ENCODE measurements at regions of chr11 and their contacts with region 1.

Region 1: DNA sequence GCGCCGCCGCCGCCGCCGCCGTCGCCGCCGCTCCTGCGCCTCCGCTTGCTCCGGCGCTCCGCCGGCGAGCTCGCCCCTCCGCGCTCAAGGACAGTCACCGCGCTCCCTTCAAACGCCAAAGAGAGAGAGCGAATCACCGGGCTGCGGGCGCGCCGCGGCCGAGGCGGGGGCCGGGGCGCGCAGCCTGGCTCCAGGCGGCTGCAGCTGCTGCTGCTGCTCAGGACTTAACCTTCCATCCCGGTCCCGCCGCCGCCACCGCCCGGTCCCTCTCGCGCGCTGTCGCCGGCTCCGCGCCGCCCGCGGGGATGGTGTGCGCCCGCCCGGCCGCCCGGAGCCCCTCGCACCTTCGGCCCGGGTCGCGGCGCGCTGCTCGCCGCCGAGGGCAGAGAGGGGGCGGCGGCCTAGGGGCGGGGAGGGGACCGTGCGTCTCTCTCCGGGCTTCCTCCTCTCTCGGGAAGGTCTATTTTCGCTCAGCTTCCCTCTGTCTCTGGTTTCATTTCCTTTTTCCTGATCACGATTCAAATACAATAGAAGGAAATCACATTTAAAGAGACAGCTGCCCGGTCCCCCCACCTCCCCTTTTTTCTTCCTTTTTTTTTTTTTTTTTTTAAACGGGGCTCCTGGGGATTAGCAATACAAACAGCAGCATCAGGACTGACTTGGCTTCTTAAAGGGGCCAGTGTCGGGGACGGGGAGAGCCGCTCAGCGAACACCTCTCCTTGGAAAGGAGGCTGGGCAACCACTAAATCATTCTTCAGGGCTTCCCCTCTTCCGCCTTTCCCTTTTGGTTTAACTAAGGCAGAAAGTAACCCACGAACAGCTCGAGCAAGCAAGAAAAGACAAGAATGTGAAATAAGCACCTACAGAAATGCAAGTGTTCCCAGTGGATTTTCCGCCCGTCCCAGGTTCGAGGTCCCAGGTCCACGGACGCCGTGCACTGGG is 22.1 kb downstream of the LMO2 start:
- DNase-seq: no peak
- H3K4me3 ChIP-seq: peak overlapping the region; percentile 30 to 60 (median 54)
- H3K27ac ChIP-seq: peak overlapping the region; percentile 55 to 79 (median 66)
- H3K4me1 ChIP-seq: peaks cover 0 to 22% (median 16%) of the 10 kb centered on the region in 4 donors
- H3K27me3 ChIP-seq: peaks cover 10 to 68% (median 41%) of the 10 kb centered on the region in 3 donors
- CTCF ChIP-seq: no peak
- EP300 ChIP-seq: no peak
- POLR2A ChIP-seq: no peak

Region 2: DNA sequence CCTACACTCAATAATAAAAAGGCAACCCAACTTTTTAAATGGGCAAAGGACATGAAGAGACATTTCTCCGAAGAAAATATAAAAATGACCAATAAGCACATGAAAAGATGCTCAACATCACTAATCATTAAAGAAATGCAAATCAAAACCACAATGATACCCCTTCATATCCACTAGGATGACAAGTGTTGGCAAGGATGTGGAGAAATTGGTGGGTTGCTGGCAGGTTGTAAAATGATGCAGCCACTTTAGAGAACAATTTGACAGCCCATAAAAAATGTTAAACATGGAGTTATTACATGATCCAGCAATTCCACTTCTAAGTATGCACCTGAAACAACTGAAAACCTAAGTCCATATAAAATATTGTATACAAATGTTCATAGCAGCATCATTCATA is 95.3 kb after region 1 on chr11:
- intact Hi-C with region 1: loop called (anchors 5 kb)
- DNase-seq: no peak
- H3K4me3 ChIP-seq: no peak overlapping the region
- H3K27ac ChIP-seq: no peak overlapping the region
- H3K4me1 ChIP-seq: no peaks in the 10 kb centered on the region
- H3K27me3 ChIP-seq: no peaks in the 10 kb centered on the region
- CTCF ChIP-seq: no peak
- EP300 ChIP-seq: no peak
- POLR2A ChIP-seq: no peak

Region 3: DNA sequence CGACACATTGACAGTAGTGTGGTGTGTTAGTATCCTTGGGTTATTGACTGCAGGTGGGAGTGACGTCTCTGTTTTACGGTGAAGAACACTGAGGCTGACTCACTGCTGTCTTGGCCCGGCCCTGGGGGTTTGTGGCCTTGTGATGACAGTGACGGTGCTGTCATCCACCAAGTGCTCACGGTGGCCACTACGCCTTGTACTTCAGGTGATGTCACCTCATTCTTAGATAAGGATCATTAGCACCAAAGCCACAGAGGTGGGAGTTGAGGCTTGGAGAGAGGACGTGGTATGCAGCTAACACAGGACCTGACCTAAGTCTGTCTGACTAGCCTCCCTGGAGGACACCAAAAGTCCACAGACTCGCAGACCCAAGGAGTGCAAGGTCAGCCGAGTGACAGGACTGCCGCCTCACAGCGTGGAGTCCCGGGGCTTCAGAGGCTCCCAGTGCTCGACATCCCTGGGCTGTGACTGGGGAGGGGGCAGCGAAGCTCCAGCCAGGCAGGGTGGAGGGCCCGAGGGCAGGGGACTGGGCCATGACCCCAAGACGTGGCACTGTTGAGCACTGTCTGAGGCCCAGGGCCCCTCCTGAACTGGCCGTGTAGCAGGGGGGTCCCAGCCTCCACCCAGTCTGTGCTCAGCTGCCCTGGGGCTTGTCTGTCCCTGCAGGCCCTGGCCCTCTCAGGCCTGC is 292.2 kb after region 1 on chr11:
- intact Hi-C with region 1: loop called (anchors 5 kb)
- DNase-seq: no peak
- H3K4me3 ChIP-seq: no peak overlapping the region
- H3K27ac ChIP-seq: no peak overlapping the region
- H3K4me1 ChIP-seq: peaks cover 0 to 6% (median 2%) of the 10 kb centered on the region in 4 donors
- H3K27me3 ChIP-seq: no peaks in the 10 kb centered on the region
- CTCF ChIP-seq: no peak
- EP300 ChIP-seq: no peak
- POLR2A ChIP-seq: no peak

Measured in sigmoid colon (tissue), 7 donors.